Psoas muscle (tissue), 8 donors: ENCODE measurements at regions of chr9 and their contacts with region 1.

Region 1: DNA sequence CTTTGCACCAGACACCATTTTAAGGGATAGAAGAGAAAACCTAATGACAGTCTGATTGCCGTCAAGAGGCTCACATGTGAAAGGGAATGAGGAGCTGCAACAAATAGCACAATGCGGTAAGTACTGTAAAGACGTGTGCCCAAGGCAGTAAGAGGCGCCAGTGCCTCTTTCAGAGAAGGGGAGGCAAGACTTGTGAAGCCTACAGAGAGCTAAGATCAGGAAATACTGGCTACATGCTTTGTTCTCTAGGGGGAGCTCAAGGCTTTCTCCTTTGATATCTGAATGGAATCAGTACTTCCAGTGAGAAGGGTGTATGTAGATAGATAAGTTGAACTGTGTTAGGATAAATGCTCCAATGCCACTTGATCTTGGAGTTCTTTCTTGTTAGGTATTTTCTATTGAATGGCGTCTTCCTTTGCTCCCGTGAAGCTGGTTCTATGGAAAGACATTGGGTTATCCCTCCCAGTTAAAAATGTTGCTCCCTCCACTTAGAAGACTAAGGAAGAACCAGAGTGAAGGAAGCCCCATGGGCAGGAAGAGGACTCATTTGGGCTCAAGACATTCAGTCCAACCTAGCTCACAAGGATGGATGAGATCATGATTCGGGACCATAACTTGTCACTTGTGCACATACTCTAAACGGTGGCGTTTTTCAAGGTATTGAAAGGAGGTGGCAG is 23.5 kb upstream of the ALDOB start:
- DNase-seq: no peak
- ATAC-seq: peak; percentile 76 to 97 (median 92)
- H3K4me3 ChIP-seq: no peak overlapping the region
- H3K27ac ChIP-seq: no peak overlapping the region
- H3K4me1 ChIP-seq: no peaks in the 10 kb centered on the region
- H3K27me3 ChIP-seq: peaks cover 0 to 3% (median 0%) of the 10 kb centered on the region in 3 donors
- CTCF ChIP-seq: peak; percentile 79

Region 2: DNA sequence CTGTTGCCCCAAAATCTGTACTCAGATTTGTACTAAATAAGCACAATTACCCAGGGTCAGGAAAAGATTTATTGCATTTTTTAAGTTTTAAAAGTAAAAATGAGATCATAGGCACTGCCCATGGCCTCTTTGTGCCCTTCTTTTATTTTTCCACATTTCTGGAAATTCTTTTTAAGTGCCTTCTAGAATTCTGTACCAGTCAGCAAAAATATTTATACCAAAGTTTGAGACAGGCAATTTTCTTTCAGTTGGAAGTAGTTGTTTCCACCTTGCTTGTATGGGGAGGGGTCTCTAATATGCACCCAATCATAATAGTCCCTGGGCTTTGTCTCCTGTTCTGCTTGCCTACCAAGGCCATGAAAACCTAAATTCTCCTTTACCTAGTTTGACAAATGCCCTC is 68.9 kb after region 1 on chr9:
- intact Hi-C with region 1: loop called (anchors 1 to 2 kb)
- DNase-seq: no peak
- ATAC-seq: no peak
- H3K4me3 ChIP-seq: no peak overlapping the region
- H3K27ac ChIP-seq: no peak overlapping the region
- H3K4me1 ChIP-seq: peaks cover 3% of the 10 kb centered on the region
- H3K27me3 ChIP-seq: no peaks in the 10 kb centered on the region
- CTCF ChIP-seq: no peak